ENCODE measurements at regions of chr5 and their contacts with region 1.

Region 1: DNA sequence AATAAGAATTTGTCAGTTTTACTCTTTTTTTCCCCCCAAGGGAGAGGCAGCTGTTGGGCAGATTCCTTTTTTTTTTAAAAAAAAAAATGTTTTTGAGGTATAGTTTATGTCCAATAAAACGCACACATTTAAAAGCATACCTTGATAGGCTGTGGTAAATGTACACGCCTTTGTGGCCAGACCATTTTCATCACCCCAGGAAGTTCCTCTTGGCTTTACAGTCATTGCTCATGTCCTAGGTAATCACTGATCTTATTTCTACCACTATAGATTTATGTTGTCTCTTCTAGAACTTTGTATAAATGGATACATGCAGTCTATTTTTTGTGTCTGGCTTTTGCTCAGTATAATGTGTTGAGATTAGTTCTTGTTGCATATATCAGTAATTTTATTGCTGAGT is 9.8 kb downstream of the SUB1 start:
- DNase-seq: no peak
- H3K4me3 ChIP-seq: no peak overlapping the region
- H3K27ac ChIP-seq: no peak overlapping the region
- H3K4me1 ChIP-seq: peaks cover 3 to 58% (median 11%) of the 10 kb centered on the region in 4 donors
- H3K27me3 ChIP-seq: no peaks in the 10 kb centered on the region
- CTCF ChIP-seq: no peak
- EP300 ChIP-seq: no peak
- POLR2A ChIP-seq: no peak

Region 2: GRCh38 chr5:30937070-30937469 is 1658.0 kb before region 1 on chr5:
- in situ Hi-C with region 1: no loop called
- intact Hi-C with region 1: no loop called
- DNase-seq: no peak
- H3K4me3 ChIP-seq: no peak overlapping the region
- H3K27ac ChIP-seq: no peak overlapping the region
- H3K4me1 ChIP-seq: no peaks in the 10 kb centered on the region
- H3K27me3 ChIP-seq: no peaks in the 10 kb centered on the region
- CTCF ChIP-seq: no peak
- EP300 ChIP-seq: no peak
- POLR2A ChIP-seq: no peak

Region 3: GRCh38 chr5:32489791-32490582 is 105.1 kb before region 1 on chr5:
- in situ Hi-C with region 1: loop called in 3 of 4 experiments (anchors 5 kb)
- intact Hi-C with region 1: no loop called
- DNase-seq: peak; percentile 76
- H3K4me3 ChIP-seq: no peak overlapping the region
- H3K27ac ChIP-seq: no peak overlapping the region
- H3K4me1 ChIP-seq: peaks cover 3 to 7% (median 4%) of the 10 kb centered on the region in 4 donors
- H3K27me3 ChIP-seq: no peaks in the 10 kb centered on the region
- CTCF ChIP-seq: peak; percentile 73 to 79 (median 75)
- EP300 ChIP-seq: no peak
- POLR2A ChIP-seq: no peak

Region 4: DNA sequence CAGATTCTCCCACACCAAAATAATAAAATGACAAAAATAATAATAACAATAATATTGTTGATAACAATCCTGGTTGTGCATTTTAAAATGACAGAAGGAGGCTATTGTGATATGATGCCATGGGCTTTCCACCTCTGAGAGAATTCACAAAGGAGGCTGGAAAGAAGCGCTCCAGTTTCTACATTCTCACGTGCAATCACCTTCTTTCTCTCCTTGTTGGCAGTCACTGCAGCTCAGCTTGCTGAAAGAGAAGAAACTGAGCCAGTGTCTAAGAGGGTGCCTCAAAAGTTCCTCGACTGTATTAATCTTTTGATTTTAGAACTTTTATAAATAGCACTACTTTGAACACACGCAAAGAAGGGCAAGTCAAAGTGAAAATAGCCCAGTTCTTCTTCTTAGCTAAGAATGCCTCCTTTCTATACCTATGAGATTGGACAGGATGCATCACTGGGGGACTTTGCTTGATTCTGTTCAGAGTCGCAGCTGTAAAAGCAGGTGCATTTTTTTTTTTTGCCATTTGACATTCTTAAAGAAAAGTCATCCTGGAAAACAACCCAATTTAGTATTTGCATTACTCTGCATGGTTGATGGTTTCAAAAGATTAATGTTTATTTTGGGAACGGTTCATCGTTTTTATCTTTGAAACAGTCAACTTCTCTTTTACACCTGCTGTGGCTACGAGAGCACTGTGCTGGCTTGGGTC is 22.2 kb before region 1 on chr5:
- in situ Hi-C with region 1: no loop called
- intact Hi-C with region 1: no loop called
- DNase-seq: no peak
- H3K4me3 ChIP-seq: no peak overlapping the region
- H3K27ac ChIP-seq: peak overlapping the region in 1 of 4 donors; percentile 32
- H3K4me1 ChIP-seq: peaks cover 0 to 7% (median 0%) of the 10 kb centered on the region in 4 donors
- H3K27me3 ChIP-seq: no peaks in the 10 kb centered on the region
- CTCF ChIP-seq: no peak
- EP300 ChIP-seq: no peak
- POLR2A ChIP-seq: no peak